Left ventricle myocardium superior (tissue), 1 donor: ENCODE measurements at regions of chr16 and their contacts with region 1.

Region 1: GRCh38 chr16:22001591-22001990 is 675 bp upstream of the PDZD9 start:
- DNase-seq: no peak
- ATAC-seq: peak; percentile 27

Region 2: DNA sequence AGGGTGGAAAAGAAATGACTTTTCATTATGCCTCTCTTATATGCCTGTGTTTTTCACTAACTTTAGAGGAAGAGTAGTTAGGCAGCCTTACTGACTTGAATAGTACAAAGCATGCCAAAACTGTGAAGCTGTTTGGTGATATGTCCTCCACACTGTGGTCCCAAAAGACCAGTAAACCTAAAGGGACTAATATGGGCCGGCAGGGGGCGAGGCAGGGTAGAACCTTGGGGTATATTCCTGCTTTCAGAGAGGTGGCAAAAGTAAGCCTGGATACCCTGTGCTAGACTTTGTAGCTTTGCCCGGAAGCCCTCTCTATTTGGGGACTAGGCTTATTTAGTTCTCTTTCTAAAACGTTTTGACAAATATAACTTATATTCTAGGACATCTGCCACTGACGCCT is 54.3 kb after region 1 on chr16:
- intact Hi-C with region 1: no loop called
- DNase-seq: no peak
- ATAC-seq: no peak

Region 3: GRCh38 chr16:22077700-22078313 is 76.2 kb after region 1 on chr16:
- intact Hi-C with region 1: loop called (anchors 5 kb)
- DNase-seq: peak; percentile 67
- ATAC-seq: peak; percentile 49

Region 4: DNA sequence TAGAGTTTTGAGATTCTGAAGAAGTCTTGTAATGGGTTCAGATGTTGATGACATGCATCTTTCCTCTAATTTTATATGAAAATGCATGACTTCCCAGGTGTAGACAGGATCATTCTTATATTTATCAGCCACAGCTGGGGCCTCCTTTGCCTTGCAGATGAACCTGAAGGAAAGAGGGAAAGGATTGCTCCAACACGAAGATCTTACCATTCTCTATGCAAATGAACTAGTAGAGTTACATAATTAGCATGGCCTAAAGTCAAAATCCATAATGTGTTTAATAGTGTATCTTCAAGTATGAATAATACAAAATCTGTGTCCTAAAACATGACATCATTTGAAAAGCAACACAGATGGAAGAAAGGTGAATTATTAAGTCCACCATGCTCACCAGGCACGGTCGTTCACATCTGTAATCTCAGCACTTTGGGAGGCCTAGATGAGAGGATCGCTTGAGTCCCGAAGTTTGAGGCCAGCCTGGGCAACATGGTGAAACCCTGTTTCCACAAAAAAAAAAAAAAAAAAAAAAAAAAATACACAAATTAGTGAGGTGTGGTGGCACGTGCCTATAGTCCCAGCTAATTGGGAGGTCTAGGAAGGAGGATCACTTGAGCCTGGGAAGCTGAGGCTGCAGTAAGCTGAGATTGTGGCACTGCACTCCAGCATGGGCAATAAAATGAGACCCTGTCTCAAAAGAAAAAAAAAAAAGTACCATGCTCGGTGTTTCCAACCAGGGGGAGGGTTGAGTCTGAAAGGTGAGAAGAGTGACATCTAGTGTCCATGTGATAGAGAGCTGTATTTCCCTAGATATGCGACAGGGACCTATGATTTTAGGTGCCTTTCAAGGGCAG is 97.0 kb after region 1 on chr16:
- intact Hi-C with region 1: loop called (anchors 5 kb)
- DNase-seq: no peak
- ATAC-seq: peak; percentile 74

Region 5: GRCh38 chr16:22188595-22189442 is 187.2 kb after region 1 on chr16:
- intact Hi-C with region 1: loop called (anchors 5 kb)
- DNase-seq: peak; percentile 61
- ATAC-seq: no peak